Colonic mucosa (tissue), 4 donors: ENCODE measurements at regions of chr10 and their contacts with region 1.

Region 1: GRCh38 chr10:12348870-12349628 is at the start of gene CAMK1D:
- DNase-seq: peak; percentile 84
- H3K4me3 ChIP-seq: peak within 1 kb of the TSS; percentile 85
- H3K27ac ChIP-seq: peak within 1 kb of the TSS; percentile 71
- H3K4me1 ChIP-seq: peaks cover 7% of the 10 kb centered on the region
- H3K27me3 ChIP-seq: no peaks in the 10 kb centered on the region
- CTCF ChIP-seq: peak; percentile 10
- total RNA-seq, gene CAMK1D: 21.3 to 29.7 TPM

Region 2: GRCh38 chr10:12279281-12279680 is 69.8 kb before region 1 on chr10:
- intact Hi-C with region 1: loop called (anchors 10 kb)
- DNase-seq: no peak
- H3K4me3 ChIP-seq: no peak overlapping the region
- H3K27ac ChIP-seq: no peak overlapping the region
- H3K4me1 ChIP-seq: no peaks in the 10 kb centered on the region
- H3K27me3 ChIP-seq: no peaks in the 10 kb centered on the region
- CTCF ChIP-seq: no peak

Region 3: GRCh38 chr10:12431151-12432101 is 82.4 kb after region 1 on chr10:
- intact Hi-C with region 1: loop called (anchors 10 kb)
- DNase-seq: no peak
- H3K4me3 ChIP-seq: no peak overlapping the region
- H3K27ac ChIP-seq: no peak overlapping the region
- H3K4me1 ChIP-seq: peaks cover 7% of the 10 kb centered on the region
- H3K27me3 ChIP-seq: no peaks in the 10 kb centered on the region
- CTCF ChIP-seq: no peak